H1 (cell line): ENCODE measurements at regions of chr7 and their contacts with region 1.

Region 1: GRCh38 chr7:51275532-51275931 is 41.1 kb downstream of the COBL start:
- DNase-seq: peak in 1 of 2 experiments; percentile 45
- H3K4me3 ChIP-seq: no peak overlapping the region
- H3K27ac ChIP-seq: no peak overlapping the region
- H3K4me1 ChIP-seq: peaks cover 0 to 6% (median 4%) of the 10 kb centered on the region in 4 experiments; a peak in 5 of 7 replicates
- H3K27me3 ChIP-seq: no peaks in the 10 kb centered on the region
- CTCF ChIP-seq: no peak
- EP300 ChIP-seq: no peak
- POLR2A ChIP-seq: no peak
- RAD21 ChIP-seq: no peak

Region 2: GRCh38 chr7:51251300-51251699 is 24.2 kb before region 1 on chr7:
- CTCF ChIA-PET with region 1: no interaction called
- POLR2A ChIA-PET with region 1: no interaction called
- DNase-seq: no peak
- H3K4me3 ChIP-seq: no peak overlapping the region
- H3K27ac ChIP-seq: no peak overlapping the region
- H3K4me1 ChIP-seq: peaks cover 0 to 8% (median 3%) of the 10 kb centered on the region in 4 experiments; a peak in 4 of 7 replicates
- H3K27me3 ChIP-seq: no peaks in the 10 kb centered on the region
- CTCF ChIP-seq: no peak
- EP300 ChIP-seq: no peak
- POLR2A ChIP-seq: no peak
- RAD21 ChIP-seq: no peak

Region 3: GRCh38 chr7:51299391-51300133 is 24.0 kb after region 1 on chr7:
- CTCF ChIA-PET with region 1: interaction called, 11 read pairs
- POLR2A ChIA-PET with region 1: interaction called, 3 read pairs
- DNase-seq: no peak
- H3K4me3 ChIP-seq: no peak overlapping the region
- H3K27ac ChIP-seq: no peak overlapping the region
- H3K4me1 ChIP-seq: peaks cover 0 to 6% (median 5%) of the 10 kb centered on the region in 4 experiments; a peak in 3 of 7 replicates
- H3K27me3 ChIP-seq: no peaks in the 10 kb centered on the region
- CTCF ChIP-seq: peak in 2 of 3 experiments; percentile 6 to 38; a peak in 2 of 4 replicates
- EP300 ChIP-seq: no peak
- POLR2A ChIP-seq: no peak
- RAD21 ChIP-seq: peak; percentile 4 to 12; a peak in 1 of 4 replicates